Transverse colon (tissue), 4 donors: ENCODE measurements at regions of chr4 and their contacts with region 1.

Region 1: GRCh38 chr4:158722917-158723793 is at the start of gene PPID:
- DNase-seq: peak; percentile 90
- H3K4me3 ChIP-seq: peak within 1 kb of the TSS; percentile 71 to 81 (median 76)
- H3K27ac ChIP-seq: peak within 1 kb of the TSS; percentile 92 to 96 (median 92)
- H3K4me1 ChIP-seq: peaks cover 0 to 16% (median 4%) of the 10 kb centered on the region in 4 donors
- H3K27me3 ChIP-seq: no peaks in the 10 kb centered on the region
- CTCF ChIP-seq: no peak
- EP300 ChIP-seq: no peak
- POLR2A ChIP-seq: peak; percentile 78
- total RNA-seq, gene PPID: 7.9 to 21.8 (median 12.8) TPM

Region 2: DNA sequence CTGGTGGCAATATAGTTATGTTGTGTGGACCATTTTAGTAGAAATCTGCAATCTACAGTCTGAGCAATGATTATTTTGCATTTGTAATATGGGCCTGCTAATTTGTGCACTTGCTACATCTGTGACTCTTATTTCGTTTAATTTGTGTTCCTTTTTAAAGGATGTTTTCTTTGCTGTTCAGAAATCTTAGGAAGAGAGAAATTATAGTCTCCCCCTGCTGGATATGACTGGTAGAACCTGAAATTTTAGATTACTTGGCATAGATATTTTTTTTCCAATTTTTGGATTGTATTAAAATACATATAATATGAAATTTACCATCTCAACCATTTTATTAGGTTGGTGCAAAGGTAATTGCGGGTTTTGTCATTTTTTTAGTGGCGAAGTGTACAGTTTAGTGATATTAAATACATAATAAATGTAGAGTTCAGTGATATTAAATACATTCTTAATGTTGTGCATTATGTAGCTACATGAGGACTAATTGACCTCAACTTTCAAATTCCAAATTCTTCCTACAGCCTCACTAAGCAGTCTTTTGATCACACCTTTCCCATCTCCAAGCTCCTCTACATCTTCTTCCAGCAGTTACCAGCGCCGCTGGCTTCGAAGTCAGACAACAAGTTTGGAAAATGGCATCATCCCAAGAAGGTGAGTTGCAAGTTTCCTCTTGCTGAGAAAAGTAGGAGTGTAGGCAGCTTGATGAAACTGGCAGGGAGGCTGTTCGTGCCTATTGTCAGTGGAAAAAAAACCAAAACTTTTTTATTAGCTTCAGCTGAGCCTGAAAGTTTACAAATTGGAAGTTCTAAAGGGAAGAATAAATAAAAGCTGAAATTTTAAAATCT is 127.9 kb after region 1 on chr4:
- in situ Hi-C with region 1: loop called in 2 of 4 experiments (anchors 5 to 10 kb)
- intact Hi-C with region 1: loop called (anchors 2 kb)
- DNase-seq: no peak
- H3K4me3 ChIP-seq: no peak overlapping the region
- H3K27ac ChIP-seq: no peak overlapping the region
- H3K4me1 ChIP-seq: peaks cover 0 to 7% (median 3%) of the 10 kb centered on the region in 4 donors
- H3K27me3 ChIP-seq: no peaks in the 10 kb centered on the region
- CTCF ChIP-seq: peak; percentile 67 to 84 (median 71)
- EP300 ChIP-seq: no peak
- POLR2A ChIP-seq: no peak

Region 3: DNA sequence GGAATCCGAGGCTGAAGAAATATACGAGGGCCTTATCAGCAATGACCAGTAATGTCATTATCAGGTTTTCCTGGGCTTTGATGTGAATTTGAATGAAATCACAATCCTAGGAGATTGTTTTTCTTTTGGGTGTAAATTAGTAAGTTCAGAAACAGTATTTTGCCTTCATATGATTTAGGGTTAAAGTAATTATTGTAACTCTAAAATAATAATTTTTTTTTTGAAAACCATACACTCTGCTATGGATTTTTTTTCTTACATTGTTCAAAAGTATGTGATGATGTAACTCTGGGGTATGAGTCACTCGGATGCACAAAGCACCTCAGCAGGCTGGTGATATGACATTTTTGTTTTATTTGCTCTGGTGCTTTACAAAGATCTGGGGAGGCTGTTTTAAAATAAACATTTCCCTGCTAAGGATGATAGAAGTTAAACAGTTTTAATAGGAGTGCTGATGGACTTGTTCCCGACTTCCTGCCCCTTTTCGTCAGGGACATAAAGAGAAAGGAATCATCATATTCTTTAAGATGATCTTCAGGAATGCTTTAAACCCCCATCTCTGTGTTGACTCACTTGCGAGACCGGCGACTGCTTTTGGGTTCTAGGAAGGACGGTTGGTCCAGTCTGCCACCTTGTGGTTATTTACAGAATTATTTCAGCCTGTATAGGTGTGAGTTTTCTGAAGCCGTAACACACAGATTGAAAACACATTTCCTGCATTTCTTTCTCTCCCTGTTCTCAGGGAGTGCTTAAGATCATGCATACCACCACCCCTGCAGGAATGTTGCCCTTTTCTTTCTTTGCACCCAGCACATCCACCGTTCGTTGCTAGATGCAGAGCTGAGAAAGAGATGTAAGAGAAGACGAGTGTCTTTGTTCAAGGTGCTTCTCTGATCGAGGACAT is 452.2 kb after region 1 on chr4:
- in situ Hi-C with region 1: loop called in 1 of 4 experiments (anchors 25 kb)
- intact Hi-C with region 1: no loop called
- DNase-seq: peak; percentile 62
- H3K4me3 ChIP-seq: no peak overlapping the region
- H3K27ac ChIP-seq: peak overlapping the region in 3 of 4 donors; percentile 45 to 62 (median 57)
- H3K4me1 ChIP-seq: peaks cover 6 to 68% (median 19%) of the 10 kb centered on the region in 4 donors
- H3K27me3 ChIP-seq: no peaks in the 10 kb centered on the region
- CTCF ChIP-seq: peak; percentile 77 to 92 (median 85)
- EP300 ChIP-seq: no peak
- POLR2A ChIP-seq: no peak

Region 4: GRCh38 chr4:159206427-159206871 is 483.3 kb after region 1 on chr4:
- in situ Hi-C with region 1: loop called in 3 of 4 experiments (anchors 5 to 10 kb)
- intact Hi-C with region 1: loop called (anchors 10 kb)
- DNase-seq: no peak
- H3K4me3 ChIP-seq: no peak overlapping the region
- H3K27ac ChIP-seq: no peak overlapping the region
- H3K4me1 ChIP-seq: peaks cover 0 to 34% (median 0%) of the 10 kb centered on the region in 4 donors
- H3K27me3 ChIP-seq: no peaks in the 10 kb centered on the region
- CTCF ChIP-seq: no peak
- EP300 ChIP-seq: no peak
- POLR2A ChIP-seq: no peak